BJ (cell line): ENCODE measurements at regions of chr11 and their contacts with region 1.

Region 1: DNA sequence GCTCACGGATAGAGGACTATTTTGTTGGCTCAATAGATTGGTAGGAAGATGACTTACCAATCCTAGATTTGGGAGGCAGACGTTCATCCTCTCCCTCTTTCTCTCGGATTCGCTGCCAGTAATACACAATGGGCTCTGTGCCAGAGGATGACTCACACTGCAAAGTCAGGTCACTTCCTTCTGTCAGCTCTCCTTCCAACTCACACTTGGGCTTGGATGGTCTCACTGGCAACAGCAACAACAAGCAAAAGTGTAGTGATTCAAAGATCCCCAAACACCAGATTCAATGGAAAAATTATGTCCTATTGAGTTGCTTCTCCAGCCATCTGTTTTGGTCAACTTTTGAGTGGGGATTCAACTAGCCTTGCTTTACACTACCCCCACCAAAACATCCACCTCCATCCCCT is 21.7 kb upstream of the HSPA8 start:
- DNase-seq: peak; percentile 91
- H3K4me3 ChIP-seq: no peak overlapping the region
- H3K27me3 ChIP-seq: no peaks in the 10 kb centered on the region
- CTCF ChIP-seq: no peak

Region 2: DNA sequence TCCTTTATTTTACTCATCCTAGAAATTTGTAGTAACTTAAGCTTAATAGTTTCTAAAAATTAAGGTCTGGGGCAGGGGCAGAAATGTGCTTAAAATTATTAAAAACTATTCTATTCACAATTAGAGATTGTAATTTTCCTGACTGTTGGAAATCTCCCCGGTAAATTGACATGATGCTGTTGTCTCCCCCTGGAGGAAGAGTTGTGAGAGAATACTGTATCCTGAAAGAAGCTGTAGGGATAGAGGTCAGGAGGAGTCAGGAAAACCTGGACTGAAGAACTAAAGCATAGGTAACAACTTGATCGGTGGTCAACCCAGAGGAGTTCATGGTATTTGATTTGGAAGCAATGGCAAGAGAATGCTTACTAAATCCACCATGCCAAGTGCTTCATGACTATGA is 1694.7 kb after region 1 on chr11:
- CTCF ChIA-PET with region 1: no interaction called
- POLR2A ChIA-PET with region 1: interaction called, 15 read pairs
- DNase-seq: no peak
- H3K4me3 ChIP-seq: no peak overlapping the region
- H3K27me3 ChIP-seq: no peaks in the 10 kb centered on the region
- CTCF ChIP-seq: no peak